Breast epithelium (tissue), 4 donors: ENCODE measurements at regions of chr1 and their contacts with region 1.

Region 1: DNA sequence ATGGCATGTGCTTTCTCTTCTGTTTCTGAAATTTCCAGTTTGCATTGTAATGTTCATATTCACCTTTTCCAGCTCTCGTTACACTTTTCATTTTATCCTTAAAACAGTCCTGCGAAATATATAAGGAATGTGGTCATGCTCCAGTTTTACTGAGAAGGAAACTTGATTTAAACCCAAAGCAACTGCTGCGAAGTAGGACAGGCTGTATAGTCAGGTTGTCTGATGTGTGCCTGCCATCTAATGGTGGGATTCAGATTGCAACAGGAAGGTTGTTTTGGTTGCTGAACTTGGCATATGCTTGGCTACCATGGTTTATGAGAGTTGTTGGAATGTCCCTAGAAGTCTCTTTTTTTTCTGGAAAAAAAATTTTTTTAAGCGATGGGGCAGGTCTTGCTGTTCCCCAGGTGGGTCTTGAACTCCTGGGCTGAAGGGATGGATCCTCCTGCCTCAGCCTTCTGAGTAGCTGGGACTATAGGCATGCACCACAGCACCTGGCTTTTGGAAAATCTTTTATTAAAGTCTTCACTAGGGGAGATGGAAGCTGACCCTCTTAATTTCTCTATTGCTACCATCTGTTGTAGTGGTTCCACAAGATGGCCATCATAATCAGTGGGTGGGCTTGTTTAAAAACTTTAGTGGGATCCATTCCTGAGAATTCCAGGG is 86.9 kb downstream of the UCK2 start:
- DNase-seq: peak in 1 of 2 donors; percentile 69
- H3K4me3 ChIP-seq: no peak overlapping the region
- H3K27ac ChIP-seq: no peak overlapping the region
- H3K4me1 ChIP-seq: peaks cover 0 to 16% of the 10 kb centered on the region in 2 donors
- H3K27me3 ChIP-seq: no peaks in the 10 kb centered on the region
- CTCF ChIP-seq: peak; percentile 88 to 95 (median 90)
- POLR2A ChIP-seq: no peak

Region 2: DNA sequence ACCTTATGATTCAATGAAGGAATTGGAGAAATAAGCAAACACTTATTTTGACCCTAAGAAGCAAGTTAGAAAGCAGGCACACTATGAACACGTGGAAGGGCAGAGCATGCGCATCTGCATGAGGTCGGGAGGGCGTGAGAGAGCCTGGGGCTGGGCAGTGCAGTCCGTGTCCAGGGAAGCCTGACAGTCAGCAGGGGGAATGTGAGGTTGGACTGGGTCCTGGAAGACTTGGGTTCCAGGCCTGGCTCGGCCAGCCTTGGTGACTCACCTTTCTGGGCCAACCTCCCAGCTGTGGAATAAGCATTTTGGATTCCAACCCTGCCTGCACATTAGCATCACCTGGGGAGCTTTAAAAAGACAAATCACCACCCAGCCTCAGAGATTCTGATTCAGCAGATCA is 531.2 kb before region 1 on chr1:
- intact Hi-C with region 1: loop called (anchors 10 kb)
- DNase-seq: peak in 1 of 2 donors; percentile 48
- H3K4me3 ChIP-seq: no peak overlapping the region
- H3K27ac ChIP-seq: peak overlapping the region; percentile 8 to 50
- H3K4me1 ChIP-seq: no peaks in the 10 kb centered on the region
- H3K27me3 ChIP-seq: no peaks in the 10 kb centered on the region
- CTCF ChIP-seq: no peak
- POLR2A ChIP-seq: no peak

Region 3: DNA sequence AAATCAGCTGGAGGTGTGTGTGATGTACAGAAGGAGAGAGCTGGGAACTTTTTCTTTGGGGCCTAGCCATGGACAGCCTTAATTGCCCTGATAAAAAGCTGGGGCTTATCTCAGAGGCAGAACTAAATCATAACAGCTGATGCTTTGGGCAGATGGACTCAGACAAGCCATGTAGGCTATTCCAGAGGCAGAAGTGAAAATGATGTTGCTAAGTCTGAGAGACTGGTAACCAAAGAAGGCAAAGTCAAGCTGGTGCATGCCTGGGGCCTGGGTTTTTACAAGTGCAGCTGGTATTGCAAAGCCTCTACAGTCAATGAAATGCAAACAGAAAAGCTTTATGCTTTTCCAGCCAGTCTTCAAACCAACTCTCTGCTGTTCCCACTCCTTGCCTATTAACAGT is 518.8 kb before region 1 on chr1:
- intact Hi-C with region 1: no loop called
- DNase-seq: no peak
- H3K4me3 ChIP-seq: no peak overlapping the region
- H3K27ac ChIP-seq: no peak overlapping the region
- H3K4me1 ChIP-seq: no peaks in the 10 kb centered on the region
- H3K27me3 ChIP-seq: no peaks in the 10 kb centered on the region
- CTCF ChIP-seq: no peak
- POLR2A ChIP-seq: no peak

Region 4: DNA sequence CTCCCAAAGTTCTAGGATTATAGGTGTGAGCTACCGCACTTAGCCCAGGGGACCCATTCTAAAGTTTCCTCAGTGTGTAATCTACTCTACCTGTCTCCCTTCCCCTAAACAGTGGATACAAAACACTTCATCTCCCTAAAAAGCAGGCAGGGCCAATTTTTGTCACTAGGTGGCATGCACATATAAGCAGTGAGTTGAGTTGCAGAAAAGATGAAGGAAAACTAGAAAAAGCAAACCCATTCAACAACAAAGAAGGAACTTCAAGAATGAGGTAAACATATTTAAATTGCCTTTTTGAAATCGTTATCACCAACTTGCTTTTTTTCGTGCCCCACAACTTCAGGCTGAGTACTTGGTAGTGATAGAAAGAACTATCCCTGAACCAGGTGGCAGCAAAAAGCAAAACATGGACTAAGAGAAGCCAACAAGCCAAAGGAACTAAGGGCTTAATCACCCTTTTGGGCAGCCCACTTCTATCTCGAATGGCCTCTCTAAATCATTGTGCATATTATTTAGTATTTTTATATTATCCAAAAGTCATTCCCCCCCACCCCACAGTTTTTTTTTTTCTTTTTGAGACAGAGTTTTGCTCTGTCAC is 196.2 kb before region 1 on chr1:
- intact Hi-C with region 1: loop called (anchors 10 kb)
- DNase-seq: no peak
- H3K4me3 ChIP-seq: no peak overlapping the region
- H3K27ac ChIP-seq: no peak overlapping the region
- H3K4me1 ChIP-seq: no peaks in the 10 kb centered on the region
- H3K27me3 ChIP-seq: no peaks in the 10 kb centered on the region
- CTCF ChIP-seq: peak; percentile 12 to 69 (median 52)
- POLR2A ChIP-seq: no peak

Region 5: GRCh38 chr1:165871311-165872067 is 42.8 kb before region 1 on chr1:
- intact Hi-C with region 1: no loop called
- DNase-seq: no peak
- H3K4me3 ChIP-seq: no peak overlapping the region
- H3K27ac ChIP-seq: peak overlapping the region in 1 of 2 donors; percentile 10
- H3K4me1 ChIP-seq: peaks cover 0 to 6% of the 10 kb centered on the region in 2 donors
- H3K27me3 ChIP-seq: no peaks in the 10 kb centered on the region
- CTCF ChIP-seq: no peak
- POLR2A ChIP-seq: no peak

Region 6: GRCh38 chr1:165965857-165966256 is 51.6 kb after region 1 on chr1:
- intact Hi-C with region 1: no loop called
- DNase-seq: no peak
- H3K4me3 ChIP-seq: no peak overlapping the region
- H3K27ac ChIP-seq: no peak overlapping the region
- H3K4me1 ChIP-seq: no peaks in the 10 kb centered on the region
- H3K27me3 ChIP-seq: no peaks in the 10 kb centered on the region
- CTCF ChIP-seq: no peak
- POLR2A ChIP-seq: no peak